ENCODE measurements at regions of chr6 and their contacts with region 1.

Region 1: GRCh38 chr6:128731249-128732165 is 151.4 kb upstream of the LAMA2 start:
- DNase-seq: peak; percentile 36
- H3K4me3 Mint-ChIP-seq: no peak overlapping the region
- H3K27ac Mint-ChIP-seq: no peak overlapping the region
- H3K4me1 Mint-ChIP-seq: no peaks in the 10 kb centered on the region
- H3K27me3 Mint-ChIP-seq: no peaks in the 10 kb centered on the region
- CTCF ChIP-seq: peak; percentile 46

Region 2: GRCh38 chr6:128168244-128168643 is 563.3 kb before region 1 on chr6:
- CTCF ChIA-PET with region 1: no interaction called
- intact Hi-C with region 1: no loop called
- DNase-seq: no peak
- H3K4me3 Mint-ChIP-seq: no peak overlapping the region
- H3K27ac Mint-ChIP-seq: peak overlapping the region; percentile 56
- H3K4me1 Mint-ChIP-seq: peaks cover 2% of the 10 kb centered on the region
- H3K27me3 Mint-ChIP-seq: no peaks in the 10 kb centered on the region
- CTCF ChIP-seq: no peak

Region 3: GRCh38 chr6:128339635-128340450 is 391.7 kb before region 1 on chr6:
- CTCF ChIA-PET with region 1: no interaction called
- intact Hi-C with region 1: loop called (anchors 10 kb)
- DNase-seq: no peak
- H3K4me3 Mint-ChIP-seq: no peak overlapping the region
- H3K27ac Mint-ChIP-seq: peak overlapping the region; percentile 50
- H3K4me1 Mint-ChIP-seq: peaks cover 49% of the 10 kb centered on the region
- H3K27me3 Mint-ChIP-seq: no peaks in the 10 kb centered on the region
- CTCF ChIP-seq: no peak

Region 4: DNA sequence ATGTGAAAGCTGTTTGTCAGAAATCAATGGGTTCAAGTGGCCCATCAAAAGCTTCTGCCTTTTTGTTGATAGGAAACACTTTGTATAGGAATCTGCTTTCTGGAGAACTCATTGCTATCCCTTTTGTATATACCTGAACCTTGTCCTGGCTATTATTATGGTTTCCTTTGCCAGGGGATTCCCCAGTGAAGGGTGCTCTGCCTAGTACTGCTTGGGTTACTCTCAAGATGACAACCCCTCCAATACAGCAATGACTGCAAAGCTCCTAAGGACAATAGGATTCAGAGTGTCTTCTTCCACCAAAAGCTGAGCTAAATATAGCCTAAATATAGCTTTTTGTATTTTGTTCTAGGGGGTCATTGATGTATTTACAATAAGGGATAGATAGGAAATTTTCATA is 157.1 kb before region 1 on chr6:
- CTCF ChIA-PET with region 1: no interaction called
- intact Hi-C with region 1: no loop called
- DNase-seq: no peak
- H3K4me3 Mint-ChIP-seq: no peak overlapping the region
- H3K27ac Mint-ChIP-seq: no peak overlapping the region
- H3K4me1 Mint-ChIP-seq: peaks cover 22% of the 10 kb centered on the region
- H3K27me3 Mint-ChIP-seq: no peaks in the 10 kb centered on the region
- CTCF ChIP-seq: no peak